Natural killer cell (primary cell): ENCODE measurements at regions of chr22 and their contacts with region 1.

Region 1: DNA sequence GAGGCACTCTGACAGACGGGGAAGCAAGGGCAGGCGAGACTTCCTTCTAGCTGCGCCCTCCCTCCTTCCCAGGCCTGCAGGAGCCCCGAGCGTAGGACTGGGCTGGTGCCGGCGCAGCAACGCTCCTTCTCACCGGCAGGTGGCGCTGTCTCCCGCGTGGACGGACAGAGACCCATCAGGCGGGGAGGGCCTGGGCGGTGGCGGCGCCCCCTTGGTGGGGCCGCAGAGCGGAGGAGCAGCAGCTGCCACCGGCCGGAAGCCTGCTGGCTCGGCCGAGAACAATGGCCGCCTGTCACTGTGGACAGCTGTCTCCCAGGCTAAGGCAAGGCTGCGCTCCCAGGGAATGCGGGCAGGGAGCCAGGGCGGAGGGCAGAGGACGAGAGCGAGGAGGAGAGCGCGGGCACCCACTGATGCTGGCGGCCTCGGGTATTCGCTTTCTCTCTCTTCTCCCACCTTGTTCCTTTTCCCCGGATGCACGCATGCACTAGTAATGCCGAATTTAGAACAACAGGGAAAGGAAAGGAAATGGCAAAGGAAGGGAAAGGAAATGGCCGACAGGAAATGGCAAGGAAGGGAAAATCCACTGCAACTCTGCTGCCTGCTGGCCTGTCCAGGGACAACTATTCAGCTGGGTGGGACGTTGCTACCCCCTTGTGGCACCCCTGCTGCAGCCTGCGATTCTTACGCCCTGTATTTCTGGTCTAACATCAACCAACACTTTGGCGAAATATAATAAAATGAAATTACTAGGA is 14.4 kb downstream of the PPM1F start:
- DNase-seq: peak; percentile 93 to 95
- ATAC-seq: peak; percentile 94 to 99 (median 96)
- H3K4me3 ChIP-seq: peak overlapping the region; percentile 55
- H3K4me3 Mint-ChIP-seq: peak overlapping the region; percentile 92
- H3K27ac ChIP-seq: peak overlapping the region; percentile 77
- H3K27ac Mint-ChIP-seq: peak overlapping the region; percentile 77 to 92
- H3K4me1 ChIP-seq: peaks cover 63% of the 10 kb centered on the region
- H3K4me1 Mint-ChIP-seq: peaks cover 22 to 42% of the 10 kb centered on the region in 2 donors
- H3K27me3 ChIP-seq: no peaks in the 10 kb centered on the region
- H3K27me3 Mint-ChIP-seq: no peaks in the 10 kb centered on the region
- CTCF ChIP-seq: peak; percentile 97

Region 2: DNA sequence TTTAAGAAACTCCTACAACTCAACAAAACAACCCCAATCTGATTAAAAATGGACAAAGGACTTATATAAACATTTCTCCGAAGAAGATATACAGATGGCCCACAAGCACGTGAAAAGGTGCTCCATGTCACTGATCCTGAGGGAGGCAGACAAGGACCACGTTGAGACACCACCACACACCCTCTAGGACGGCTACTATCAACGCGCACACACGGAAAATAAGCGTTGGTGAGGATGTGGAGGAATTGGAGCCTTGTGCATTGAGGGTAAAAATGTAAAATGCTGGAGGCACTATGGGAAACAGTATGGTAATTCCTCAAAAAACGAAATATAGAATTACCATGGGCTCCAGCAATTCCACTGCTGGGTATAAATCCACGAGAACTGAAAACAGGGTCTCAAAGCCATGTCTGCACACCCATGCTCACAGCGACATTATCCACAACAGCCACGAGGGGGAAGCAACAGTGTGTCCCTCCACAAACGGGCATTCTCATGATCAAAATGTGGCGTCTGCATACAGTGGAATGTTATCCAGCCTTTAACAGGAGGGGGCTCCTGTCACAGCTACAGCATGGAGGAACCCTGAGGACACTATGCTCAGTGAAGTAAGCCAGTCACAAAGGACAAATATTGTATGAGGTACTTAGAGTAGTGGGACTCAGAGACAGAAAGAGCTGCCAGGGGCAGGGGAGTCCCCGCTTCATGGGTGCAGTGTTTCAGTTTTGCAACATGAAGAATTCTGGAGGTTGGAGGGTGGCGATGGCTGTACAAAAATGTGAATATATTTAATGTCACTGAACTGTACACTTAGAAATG is 225.1 kb before region 1 on chr22:
- intact Hi-C with region 1: loop called (anchors 1 kb)
- DNase-seq: peak; percentile 59 to 82
- ATAC-seq: peak; percentile 83 to 98 (median 95)
- H3K4me3 ChIP-seq: no peak overlapping the region
- H3K4me3 Mint-ChIP-seq: no peak overlapping the region
- H3K27ac ChIP-seq: no peak overlapping the region
- H3K27ac Mint-ChIP-seq: peak overlapping the region; percentile 76 to 80
- H3K4me1 ChIP-seq: peaks cover 7% of the 10 kb centered on the region
- H3K4me1 Mint-ChIP-seq: peaks cover 21 to 23% of the 10 kb centered on the region in 2 donors
- H3K27me3 ChIP-seq: no peaks in the 10 kb centered on the region
- H3K27me3 Mint-ChIP-seq: no peaks in the 10 kb centered on the region
- CTCF ChIP-seq: peak; percentile 74

Region 3: DNA sequence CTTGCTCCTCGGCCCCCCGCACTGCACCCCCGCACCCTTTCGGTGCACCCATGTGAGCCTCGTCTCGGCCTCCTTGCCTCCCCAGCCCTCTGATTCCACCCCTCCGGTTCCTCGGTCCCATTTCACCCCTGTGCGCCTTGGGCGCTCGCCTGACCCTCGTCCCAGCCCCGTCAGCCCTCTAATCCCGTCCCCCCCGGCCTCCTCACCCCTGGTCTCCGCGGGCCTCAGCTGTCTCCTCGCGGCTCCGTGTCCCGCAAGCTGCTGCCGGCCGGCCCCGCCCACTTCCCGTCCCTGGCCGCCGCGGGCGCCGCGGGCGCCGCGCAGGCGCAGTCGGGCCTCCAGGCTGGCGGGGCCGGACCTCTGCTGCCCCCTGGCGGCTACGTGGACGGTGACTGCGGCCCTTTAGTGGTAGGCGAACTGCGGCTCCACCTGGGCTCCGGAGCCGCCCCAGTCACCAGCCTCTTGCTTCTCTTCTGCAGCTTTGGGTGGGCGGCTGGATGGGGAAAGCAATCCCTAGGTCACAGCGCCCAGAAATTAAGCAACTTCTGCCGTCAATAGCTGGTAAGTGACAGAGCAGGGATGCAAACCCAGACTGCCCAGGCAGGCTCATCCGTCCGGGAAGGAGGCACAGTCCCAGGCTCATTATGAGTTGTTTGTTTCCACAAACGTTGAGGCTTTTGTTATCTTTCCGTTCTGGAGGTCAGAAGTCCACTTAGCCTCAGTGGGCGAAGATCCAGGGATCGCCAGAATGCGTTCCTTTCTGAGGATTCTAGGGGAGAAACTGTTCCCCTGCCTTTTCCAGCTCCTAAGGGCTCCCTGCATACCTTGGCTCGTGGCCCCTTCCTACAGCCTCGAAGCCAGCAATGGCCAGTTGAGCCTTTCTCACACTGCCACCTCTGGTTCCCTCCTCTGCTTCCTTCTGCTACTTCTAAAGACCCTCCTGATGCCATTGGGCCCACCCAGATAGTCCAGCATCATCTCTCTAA is 14.6 kb after region 1 on chr22 and contains the start of gene PPM1F:
- intact Hi-C with region 1: loop called (anchors 2 kb)
- DNase-seq: peak; percentile 96
- ATAC-seq: peak; percentile 91 to 95 (median 94)
- H3K4me3 ChIP-seq: peak within 1 kb of the TSS; percentile 77
- H3K4me3 Mint-ChIP-seq: peak within 1 kb of the TSS; percentile 78
- H3K27ac ChIP-seq: peak within 1 kb of the TSS; percentile 41
- H3K27ac Mint-ChIP-seq: peak within 1 kb of the TSS; percentile 58 to 73
- H3K4me1 ChIP-seq: peaks cover 22% of the 10 kb centered on the region
- H3K4me1 Mint-ChIP-seq: peaks cover 7 to 27% of the 10 kb centered on the region in 2 donors
- H3K27me3 ChIP-seq: no peaks in the 10 kb centered on the region
- H3K27me3 Mint-ChIP-seq: no peaks in the 10 kb centered on the region
- CTCF ChIP-seq: peak; percentile 77
- total RNA-seq, gene PPM1F: 25.1 to 30.3 (median 25.5) TPM

Region 4: DNA sequence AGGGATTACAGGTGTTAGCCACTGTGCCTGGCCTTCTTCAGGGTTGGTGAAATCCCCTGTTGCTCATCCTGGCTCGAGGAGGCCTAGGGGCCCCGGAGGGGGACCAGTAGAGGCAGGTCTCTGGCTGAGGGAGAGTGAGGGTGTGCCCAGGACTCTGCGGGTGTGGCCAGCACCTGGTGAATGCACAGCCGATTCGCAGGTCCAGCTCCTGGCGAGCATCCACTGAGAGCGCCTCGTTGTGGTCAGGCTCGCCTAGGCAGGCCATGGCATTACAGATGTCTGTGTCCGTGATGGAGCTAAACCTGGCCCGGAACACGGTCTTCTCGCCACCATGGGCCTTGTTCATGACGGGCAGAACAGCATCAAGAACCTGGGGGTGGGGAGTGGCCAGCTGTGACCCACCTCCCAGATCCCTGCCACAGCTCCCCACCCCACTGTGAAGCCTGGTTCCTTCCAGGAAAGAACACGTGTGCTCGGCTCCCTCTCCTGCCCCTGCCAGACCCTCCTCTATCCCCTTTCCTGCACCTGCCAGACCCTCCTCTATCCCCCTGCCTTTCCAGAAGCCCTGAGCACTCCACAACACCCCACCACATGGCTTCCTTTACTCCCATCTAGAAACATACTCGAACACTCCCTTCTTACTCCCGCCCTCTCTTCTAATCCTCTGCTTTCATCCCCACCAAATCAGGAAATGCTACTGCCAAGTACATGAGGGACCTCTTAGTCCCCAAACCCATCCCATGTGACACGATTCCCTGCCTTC is 32.0 kb after region 1 on chr22:
- intact Hi-C with region 1: no loop called
- DNase-seq: no peak
- ATAC-seq: no peak
- H3K4me3 ChIP-seq: no peak overlapping the region
- H3K4me3 Mint-ChIP-seq: no peak overlapping the region
- H3K27ac ChIP-seq: no peak overlapping the region
- H3K27ac Mint-ChIP-seq: no peak overlapping the region
- H3K4me1 ChIP-seq: no peaks in the 10 kb centered on the region
- H3K4me1 Mint-ChIP-seq: peaks cover 0 to 9% of the 10 kb centered on the region in 2 donors
- H3K27me3 ChIP-seq: no peaks in the 10 kb centered on the region
- H3K27me3 Mint-ChIP-seq: no peaks in the 10 kb centered on the region
- CTCF ChIP-seq: no peak